Activated CD4-positive, alpha-beta T cell treated with anti-CD3 and anti-CD28 coated beads for 36 hours (primary cell): ENCODE measurements at regions of chr1 and their contacts with region 1.

Region 1: GRCh38 chr1:25675729-25676476 is 59.3 kb downstream of the MAN1C1 start:
- DNase-seq: peak; percentile 94
- ATAC-seq: peak; percentile 85
- H3K4me3 Mint-ChIP-seq: peak overlapping the region; percentile 50
- H3K27ac Mint-ChIP-seq: peak overlapping the region; percentile 78
- H3K4me1 Mint-ChIP-seq: peaks cover 89% of the 10 kb centered on the region
- H3K27me3 Mint-ChIP-seq: peaks cover 2% of the 10 kb centered on the region

Region 2: GRCh38 chr1:25549273-25550154 is 126.4 kb before region 1 on chr1:
- CTCF ChIA-PET with region 1: interaction called, 5 read pairs
- POLR2A ChIA-PET with region 1: interaction called, 5 read pairs
- intact Hi-C with region 1: loop called in 1 of 2 experiments (anchors 2 kb)
- DNase-seq: peak; percentile 90
- ATAC-seq: peak; percentile 96
- H3K4me3 Mint-ChIP-seq: peak overlapping the region; percentile 69
- H3K27ac Mint-ChIP-seq: peak overlapping the region; percentile 98
- H3K4me1 Mint-ChIP-seq: peaks cover 90% of the 10 kb centered on the region
- H3K27me3 Mint-ChIP-seq: no peaks in the 10 kb centered on the region

Region 3: GRCh38 chr1:25608488-25609178 is 67.3 kb before region 1 on chr1:
- CTCF ChIA-PET with region 1: interaction called, 12 read pairs
- POLR2A ChIA-PET with region 1: interaction called, 3 read pairs
- intact Hi-C with region 1: no loop called
- DNase-seq: peak; percentile 95
- ATAC-seq: peak; percentile 99
- H3K4me3 Mint-ChIP-seq: no peak overlapping the region
- H3K27ac Mint-ChIP-seq: no peak overlapping the region
- H3K4me1 Mint-ChIP-seq: peaks cover 11% of the 10 kb centered on the region
- H3K27me3 Mint-ChIP-seq: peaks cover 6% of the 10 kb centered on the region

Region 4: GRCh38 chr1:25624156-25624555 is 51.7 kb before region 1 on chr1:
- CTCF ChIA-PET with region 1: interaction called, 30 read pairs
- POLR2A ChIA-PET with region 1: interaction called, 17 read pairs
- intact Hi-C with region 1: loop called (anchors 1 to 2 kb)
- DNase-seq: peak; percentile 47
- ATAC-seq: no peak
- H3K4me3 Mint-ChIP-seq: no peak overlapping the region
- H3K27ac Mint-ChIP-seq: peak overlapping the region; percentile 10
- H3K4me1 Mint-ChIP-seq: peaks cover 70% of the 10 kb centered on the region
- H3K27me3 Mint-ChIP-seq: no peaks in the 10 kb centered on the region

Region 5: DNA sequence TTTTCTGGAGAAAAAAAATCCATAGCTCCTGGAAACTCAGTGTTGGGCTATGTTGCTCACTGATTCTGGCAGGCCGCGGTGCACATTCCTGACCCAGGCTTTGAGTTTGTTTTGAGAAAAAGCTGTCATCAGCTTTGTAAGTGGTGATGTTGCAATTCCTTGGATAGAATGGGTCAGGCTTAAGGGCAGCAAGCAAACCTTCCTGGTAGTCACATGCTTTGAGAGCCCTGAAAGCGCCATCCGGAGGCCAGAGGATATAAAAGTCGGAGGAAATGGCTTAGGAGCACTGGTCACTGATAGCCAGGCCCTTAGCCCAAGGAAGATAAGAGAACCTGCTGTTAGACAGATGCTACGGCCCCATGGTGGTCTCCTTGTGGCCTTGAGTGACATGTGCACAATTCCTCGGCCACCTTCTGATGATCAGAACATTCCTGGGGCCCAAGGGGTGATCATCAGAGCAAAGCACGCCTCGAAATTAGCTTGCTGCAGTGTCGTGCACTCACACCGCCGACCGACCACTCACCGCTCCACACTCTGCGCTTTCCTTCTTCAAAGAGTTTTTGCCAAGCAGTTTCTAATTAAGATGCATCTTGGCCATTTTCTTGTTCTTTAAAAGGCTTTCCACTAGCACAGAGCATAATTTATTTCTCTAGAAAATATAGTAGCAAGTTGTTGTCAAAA is 19.3 kb after region 1 on chr1:
- CTCF ChIA-PET with region 1: interaction called, 10 read pairs
- POLR2A ChIA-PET with region 1: interaction called, 10 read pairs
- intact Hi-C with region 1: loop called (anchors 1 to 2 kb)
- DNase-seq: no peak
- ATAC-seq: no peak
- H3K4me3 Mint-ChIP-seq: peak overlapping the region; percentile 43
- H3K27ac Mint-ChIP-seq: peak overlapping the region; percentile 70
- H3K4me1 Mint-ChIP-seq: peaks cover 56% of the 10 kb centered on the region
- H3K27me3 Mint-ChIP-seq: no peaks in the 10 kb centered on the region

Region 6: GRCh38 chr1:25774921-25775801 is 99.3 kb after region 1 on chr1:
- CTCF ChIA-PET with region 1: interaction called, 3 read pairs
- POLR2A ChIA-PET with region 1: no interaction called
- intact Hi-C with region 1: loop called (anchors 1 to 2 kb)
- DNase-seq: peak; percentile 94
- ATAC-seq: peak; percentile 85
- H3K4me3 Mint-ChIP-seq: peak overlapping the region; percentile 57
- H3K27ac Mint-ChIP-seq: peak overlapping the region; percentile 84
- H3K4me1 Mint-ChIP-seq: peaks cover 80% of the 10 kb centered on the region
- H3K27me3 Mint-ChIP-seq: no peaks in the 10 kb centered on the region

Region 7: GRCh38 chr1:25933479-25934365 is 257.8 kb after region 1 on chr1:
- CTCF ChIA-PET with region 1: no interaction called
- POLR2A ChIA-PET with region 1: no interaction called
- intact Hi-C with region 1: no loop called
- DNase-seq: no peak
- ATAC-seq: no peak
- H3K4me3 Mint-ChIP-seq: no peak overlapping the region
- H3K27ac Mint-ChIP-seq: no peak overlapping the region
- H3K4me1 Mint-ChIP-seq: no peaks in the 10 kb centered on the region
- H3K27me3 Mint-ChIP-seq: no peaks in the 10 kb centered on the region